ENCODE measurements at regions of chr16 and their contacts with region 1.

Region 1: DNA sequence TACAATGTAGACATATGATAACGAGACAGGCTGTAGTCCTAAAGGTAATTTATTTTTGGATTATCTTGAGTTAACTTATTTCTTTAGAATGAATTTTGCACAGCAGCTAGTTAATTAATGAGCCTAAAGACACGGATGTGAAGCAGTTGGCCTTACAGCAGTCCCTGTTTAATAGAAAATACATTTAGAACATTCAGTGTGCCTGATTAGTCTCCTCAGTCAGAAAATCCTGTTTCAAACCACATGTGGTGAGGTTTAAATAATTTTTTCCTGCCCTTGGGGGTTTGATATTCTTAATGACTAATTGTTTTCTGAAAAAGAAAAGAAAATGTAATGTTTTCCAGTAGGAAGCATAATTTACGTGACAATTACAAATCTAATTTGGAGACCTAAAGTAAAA is 494.2 kb upstream of the CDH8 start:
- DNase-seq: no peak

Region 2: GRCh38 chr16:62546701-62547100 is 16.3 kb after region 1 on chr16:
- intact Hi-C with region 1: loop called in 1 of 2 experiments (anchors 1 kb)
- DNase-seq: no peak

Region 3: GRCh38 chr16:62576636-62577035 is 46.2 kb after region 1 on chr16:
- intact Hi-C with region 1: no loop called
- DNase-seq: no peak